ENCODE measurements at regions of chr17 and their contacts with region 1.

Region 1: GRCh38 chr17:56489980-56490379 is 103.5 kb upstream of the NOG start:
- DNase-seq: no peak
- ATAC-seq: no peak
- H3K4me3 ChIP-seq: no peak overlapping the region
- H3K4me3 Mint-ChIP-seq: no peak overlapping the region
- H3K27ac ChIP-seq: no peak overlapping the region
- H3K27ac Mint-ChIP-seq: no peak overlapping the region
- H3K4me1 ChIP-seq: no peaks in the 10 kb centered on the region
- H3K4me1 Mint-ChIP-seq: no peaks in the 10 kb centered on the region
- H3K27me3 ChIP-seq: no peaks in the 10 kb centered on the region
- H3K27me3 Mint-ChIP-seq: peaks cover 0 to 18% (median 9%) of the 10 kb centered on the region in 5 donors

Region 2: DNA sequence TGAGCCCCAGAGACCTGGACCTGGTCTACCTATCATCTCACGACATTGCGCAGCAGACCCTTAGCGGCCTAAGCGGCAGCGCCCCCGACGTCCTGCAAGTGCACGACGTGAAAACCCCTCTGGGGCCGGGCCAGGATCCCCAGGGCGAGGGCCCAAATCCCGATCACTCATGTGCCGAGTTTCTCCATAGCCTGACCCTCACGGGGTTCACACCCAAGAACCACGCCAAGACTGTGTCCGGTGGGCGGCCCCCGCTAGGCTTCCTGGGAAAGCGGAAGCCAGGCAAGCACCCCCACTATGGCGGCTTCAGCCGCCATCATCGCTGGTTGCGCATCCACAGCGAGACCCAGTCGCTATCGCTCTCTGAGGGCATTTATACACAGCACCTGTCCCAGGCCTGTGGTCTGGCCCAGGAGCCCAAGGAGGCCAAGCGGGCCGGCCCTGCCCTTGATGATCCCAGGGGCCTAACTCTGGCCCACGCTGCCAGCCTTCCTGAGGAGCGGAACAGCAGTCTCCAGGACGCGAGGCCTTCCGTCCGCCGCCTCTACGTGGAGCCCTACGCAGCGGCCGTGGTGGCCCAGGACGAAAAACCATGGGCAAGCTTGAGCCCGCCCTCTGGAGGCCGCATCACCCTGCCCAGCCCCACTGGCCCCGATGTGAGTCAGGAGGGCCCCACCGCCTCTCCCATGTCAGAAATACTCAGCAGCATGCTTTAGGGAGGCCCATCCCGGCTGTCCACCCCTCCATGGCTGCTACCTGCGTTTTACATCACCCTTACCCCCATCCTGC is 20.8 kb after region 1 on chr17:
- CTCF ChIA-PET with region 1: no interaction called
- POLR2A ChIA-PET with region 1: no interaction called
- intact Hi-C with region 1: loop called in 1 of 2 experiments (anchors 1 kb)
- DNase-seq: no peak
- ATAC-seq: no peak
- H3K4me3 ChIP-seq: no peak overlapping the region
- H3K4me3 Mint-ChIP-seq: no peak overlapping the region
- H3K27ac ChIP-seq: no peak overlapping the region
- H3K27ac Mint-ChIP-seq: no peak overlapping the region
- H3K4me1 ChIP-seq: no peaks in the 10 kb centered on the region
- H3K4me1 Mint-ChIP-seq: no peaks in the 10 kb centered on the region
- H3K27me3 ChIP-seq: no peaks in the 10 kb centered on the region
- H3K27me3 Mint-ChIP-seq: peaks cover 0 to 14% (median 0%) of the 10 kb centered on the region in 5 donors